ENCODE measurements at regions of chr20 and their contacts with region 1.

Region 1: DNA sequence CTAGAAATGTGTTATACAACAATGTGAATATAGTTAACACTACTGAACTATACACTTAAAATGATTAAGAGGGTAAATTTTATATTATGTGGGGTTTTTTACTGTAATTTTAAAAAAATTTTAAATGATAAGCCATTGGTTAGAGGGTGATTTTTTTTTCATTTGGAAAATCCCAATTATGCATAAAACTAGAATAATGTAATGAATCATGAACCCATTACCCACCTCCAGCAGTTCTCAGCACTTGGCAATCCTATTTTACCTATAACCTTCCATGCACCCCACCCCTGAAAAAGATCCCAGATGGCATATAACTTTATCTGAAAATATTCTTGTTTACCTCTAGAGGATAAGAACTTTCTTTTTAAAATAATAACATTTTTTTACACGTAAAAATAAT is 13.7 kb downstream of the KIF3B start:
- DNase-seq: no peak
- H3K4me3 ChIP-seq: no peak overlapping the region
- H3K27ac ChIP-seq: no peak overlapping the region
- H3K4me1 ChIP-seq: peaks cover 3% of the 10 kb centered on the region
- H3K27me3 ChIP-seq: no peaks in the 10 kb centered on the region
- CTCF ChIP-seq: no peak

Region 2: GRCh38 chr20:31920102-31920855 is 370.9 kb before region 1 on chr20:
- CTCF ChIA-PET with region 1: no interaction called
- POLR2A ChIA-PET with region 1: no interaction called
- intact Hi-C with region 1: no loop called
- DNase-seq: no peak
- H3K4me3 ChIP-seq: no peak overlapping the region
- H3K27ac ChIP-seq: no peak overlapping the region
- H3K4me1 ChIP-seq: no peaks in the 10 kb centered on the region
- H3K27me3 ChIP-seq: no peaks in the 10 kb centered on the region
- CTCF ChIP-seq: no peak

Region 3: GRCh38 chr20:32509639-32510066 is 218.5 kb after region 1 on chr20:
- CTCF ChIA-PET with region 1: no interaction called
- POLR2A ChIA-PET with region 1: interaction called, 16 read pairs
- intact Hi-C with region 1: no loop called
- DNase-seq: no peak
- H3K4me3 ChIP-seq: no peak overlapping the region
- H3K27ac ChIP-seq: no peak overlapping the region
- H3K4me1 ChIP-seq: no peaks in the 10 kb centered on the region
- H3K27me3 ChIP-seq: no peaks in the 10 kb centered on the region
- CTCF ChIP-seq: no peak

Region 4: GRCh38 chr20:33299111-33299603 is 1008.0 kb after region 1 on chr20:
- CTCF ChIA-PET with region 1: no interaction called
- POLR2A ChIA-PET with region 1: no interaction called
- intact Hi-C with region 1: no loop called
- DNase-seq: peak; percentile 74
- H3K4me3 ChIP-seq: no peak overlapping the region
- H3K27ac ChIP-seq: no peak overlapping the region
- H3K4me1 ChIP-seq: no peaks in the 10 kb centered on the region
- H3K27me3 ChIP-seq: peaks cover 40% of the 10 kb centered on the region
- CTCF ChIP-seq: peak; percentile 95